PC-9 (cell line): ENCODE measurements at regions of chr5 and their contacts with region 1.

Region 1: GRCh38 chr5:66197771-66198405 is 53.8 kb downstream of the SREK1 start:
- DNase-seq: peak; percentile 81 to 96
- H3K4me3 ChIP-seq: no peak overlapping the region
- H3K27ac ChIP-seq: peak overlapping the region; percentile 84
- H3K4me1 ChIP-seq: peaks cover 35% of the 10 kb centered on the region
- H3K27me3 ChIP-seq: no peaks in the 10 kb centered on the region
- CTCF ChIP-seq: no peak

Region 2: DNA sequence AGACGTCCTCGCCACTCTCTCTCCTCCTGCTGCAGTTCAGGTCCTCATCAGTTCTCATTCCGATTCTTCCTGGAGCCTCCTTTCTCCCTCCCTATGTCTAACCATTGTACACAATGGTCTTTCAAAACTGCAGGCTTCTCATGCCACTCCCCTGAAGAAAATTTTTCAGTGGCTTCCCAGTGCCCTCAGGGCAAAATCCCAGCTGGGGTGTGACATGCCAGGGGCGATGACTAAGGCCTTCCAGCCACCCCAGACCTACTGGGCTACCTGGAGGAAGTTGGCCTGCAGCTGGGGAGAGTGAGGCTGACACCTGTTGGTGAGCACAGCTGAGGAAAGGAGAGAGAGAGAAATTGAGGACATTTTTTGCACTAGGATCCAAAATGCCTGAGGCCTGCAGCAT is 11.5 kb after region 1 on chr5:
- CTCF ChIA-PET with region 1: no interaction called
- POLR2A ChIA-PET with region 1: interaction called, 3 read pairs
- intact Hi-C with region 1: loop called (anchors 1 kb)
- DNase-seq: peak; percentile 98
- H3K4me3 ChIP-seq: peak overlapping the region; percentile 13; the same call in 1 of the 2 replicates
- H3K27ac ChIP-seq: peak overlapping the region; percentile 78
- H3K4me1 ChIP-seq: peaks cover 24% of the 10 kb centered on the region
- H3K27me3 ChIP-seq: no peaks in the 10 kb centered on the region
- CTCF ChIP-seq: peak; percentile 55